Right cardiac atrium (tissue), 5 donors: ENCODE measurements at regions of chr7 and their contacts with region 1.

Region 1: DNA sequence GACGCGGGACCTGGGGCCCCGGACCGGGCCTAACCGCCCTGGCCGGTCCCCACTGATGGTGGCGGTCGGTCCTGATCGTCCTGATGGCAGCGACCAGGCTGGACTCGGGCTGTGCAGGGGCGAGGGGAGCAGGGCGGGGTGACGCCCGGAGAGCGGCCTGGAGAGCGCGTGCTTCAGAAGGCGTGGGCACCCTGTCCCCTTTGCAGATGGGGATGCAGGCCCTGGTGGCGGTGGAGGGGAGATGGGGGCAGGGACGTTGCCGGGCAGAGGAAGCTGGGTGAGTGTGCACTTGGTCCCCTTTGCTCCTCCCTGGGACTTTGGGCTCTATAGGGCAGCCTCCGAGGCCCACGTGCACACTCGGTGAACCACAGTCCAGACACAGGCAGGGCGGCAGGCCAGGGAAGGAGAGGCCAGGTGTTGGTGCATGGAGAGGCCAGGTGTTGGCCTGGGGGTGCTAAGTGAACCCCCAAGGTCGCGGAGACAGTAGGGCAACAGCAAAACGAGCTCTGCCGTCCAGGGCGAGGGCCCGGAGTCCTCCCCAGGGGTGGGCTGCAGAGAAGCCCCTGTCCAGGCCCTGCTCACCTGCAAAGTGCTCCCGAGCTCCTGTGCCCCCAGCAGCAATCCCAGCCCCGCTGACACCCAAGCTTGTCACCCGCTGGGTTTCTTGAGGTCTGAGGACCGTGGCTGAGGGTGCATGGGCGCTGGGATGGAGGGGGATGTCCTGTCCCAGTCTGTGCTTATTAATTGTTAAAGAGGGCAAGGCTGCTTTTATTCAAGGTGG is 42.3 kb upstream of the FAM20C start:
- DNase-seq: peak; percentile 57 to 88 (median 86)
- ATAC-seq: peak; percentile 46 to 49
- H3K4me3 ChIP-seq: peak overlapping the region; percentile 33
- H3K27ac ChIP-seq: peak overlapping the region; percentile 87
- H3K4me1 ChIP-seq: peaks cover 4% of the 10 kb centered on the region
- H3K27me3 ChIP-seq: no peaks in the 10 kb centered on the region

Region 2: GRCh38 chr7:184294-185264 is 34.5 kb after region 1 on chr7:
- intact Hi-C with region 1: loop called in 1 of 4 experiments (anchors 5 kb)
- DNase-seq: peak in 2 of 3 donors; percentile 76 to 86
- ATAC-seq: peak; percentile 61 to 63
- H3K4me3 ChIP-seq: no peak overlapping the region
- H3K27ac ChIP-seq: no peak overlapping the region
- H3K4me1 ChIP-seq: no peaks in the 10 kb centered on the region
- H3K27me3 ChIP-seq: no peaks in the 10 kb centered on the region

Region 3: GRCh38 chr7:191981-192649 is 42.1 kb after region 1 on chr7 and contains the start of gene FAM20C:
- intact Hi-C with region 1: loop called in 2 of 4 experiments (anchors 5 kb)
- DNase-seq: peak; percentile 92 to 97 (median 95)
- ATAC-seq: peak; percentile 88 to 91
- H3K4me3 ChIP-seq: peak within 1 kb of the TSS; percentile 86
- H3K27ac ChIP-seq: peak within 1 kb of the TSS; percentile 86
- H3K4me1 ChIP-seq: no peaks in the 10 kb centered on the region
- H3K27me3 ChIP-seq: no peaks in the 10 kb centered on the region
- total RNA-seq, gene FAM20C: 25.3 to 46.3 (median 33.9) TPM

Region 4: GRCh38 chr7:464454-465401 is 314.7 kb after region 1 on chr7:
- intact Hi-C with region 1: no loop called
- DNase-seq: peak in 2 of 3 donors; percentile 74 to 81
- ATAC-seq: peak in 1 of 2 donors; percentile 10
- H3K4me3 ChIP-seq: no peak overlapping the region
- H3K27ac ChIP-seq: no peak overlapping the region
- H3K4me1 ChIP-seq: no peaks in the 10 kb centered on the region
- H3K27me3 ChIP-seq: no peaks in the 10 kb centered on the region

Region 5: GRCh38 chr7:503575-504111 is 353.6 kb after region 1 on chr7:
- intact Hi-C with region 1: no loop called
- DNase-seq: peak; percentile 62 to 77 (median 72)
- ATAC-seq: peak; percentile 62 to 65
- H3K4me3 ChIP-seq: no peak overlapping the region
- H3K27ac ChIP-seq: no peak overlapping the region
- H3K4me1 ChIP-seq: no peaks in the 10 kb centered on the region
- H3K27me3 ChIP-seq: no peaks in the 10 kb centered on the region